ENCODE measurements at regions of chr11 and their contacts with region 1.

Region 1: GRCh38 chr11:75532200-75533048 is 6.7 kb upstream of the GDPD5 start:
- DNase-seq: peak; percentile 62 to 65
- ATAC-seq: peak in 6 of 8 donors; percentile 38 to 59 (median 48)
- H3K4me3 ChIP-seq: no peak overlapping the region
- H3K27ac ChIP-seq: no peak overlapping the region
- H3K4me1 ChIP-seq: peaks cover 0 to 21% (median 13%) of the 10 kb centered on the region in 9 donors
- H3K27me3 ChIP-seq: no peaks in the 10 kb centered on the region
- CTCF ChIP-seq: peak; percentile 85 to 97 (median 93)

Region 2: DNA sequence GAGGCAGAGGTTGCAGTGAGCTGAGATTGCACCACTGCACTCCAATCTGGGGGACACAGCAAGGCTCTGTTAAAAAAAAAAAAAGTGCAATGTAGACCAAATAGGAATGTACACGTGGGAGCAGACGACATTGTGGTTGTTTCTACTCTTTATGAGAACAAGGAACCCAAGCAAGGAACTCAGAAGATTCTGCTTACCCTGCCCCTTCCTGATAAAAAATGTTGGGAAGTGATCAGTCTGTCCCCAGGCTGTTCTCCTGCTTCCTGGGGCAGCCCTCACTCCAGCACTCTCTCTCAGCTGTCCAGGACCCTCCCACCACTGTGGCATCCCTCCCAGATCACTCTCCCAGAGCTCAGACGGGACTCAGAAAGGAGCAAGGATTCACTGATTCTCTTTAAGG is 349.8 kb before region 1 on chr11:
- intact Hi-C with region 1: no loop called
- DNase-seq: no peak
- ATAC-seq: peak in 7 of 8 donors; percentile 19 to 72 (median 51)
- H3K4me3 ChIP-seq: no peak overlapping the region
- H3K27ac ChIP-seq: peak overlapping the region in 4 of 10 donors; percentile 61 to 86 (median 67)
- H3K4me1 ChIP-seq: peaks cover 0 to 78% (median 25%) of the 10 kb centered on the region in 9 donors
- H3K27me3 ChIP-seq: no peaks in the 10 kb centered on the region
- CTCF ChIP-seq: no peak

Region 3: GRCh38 chr11:75270896-75271418 is 261.5 kb before region 1 on chr11:
- intact Hi-C with region 1: loop called in 2 of 10 experiments (anchors 5 to 10 kb)
- DNase-seq: no peak
- ATAC-seq: no peak
- H3K4me3 ChIP-seq: no peak overlapping the region
- H3K27ac ChIP-seq: no peak overlapping the region
- H3K4me1 ChIP-seq: peaks cover 0 to 15% (median 0%) of the 10 kb centered on the region in 9 donors
- H3K27me3 ChIP-seq: no peaks in the 10 kb centered on the region
- CTCF ChIP-seq: peak in 6 of 9 donors; percentile 6 to 37 (median 26)

Region 4: DNA sequence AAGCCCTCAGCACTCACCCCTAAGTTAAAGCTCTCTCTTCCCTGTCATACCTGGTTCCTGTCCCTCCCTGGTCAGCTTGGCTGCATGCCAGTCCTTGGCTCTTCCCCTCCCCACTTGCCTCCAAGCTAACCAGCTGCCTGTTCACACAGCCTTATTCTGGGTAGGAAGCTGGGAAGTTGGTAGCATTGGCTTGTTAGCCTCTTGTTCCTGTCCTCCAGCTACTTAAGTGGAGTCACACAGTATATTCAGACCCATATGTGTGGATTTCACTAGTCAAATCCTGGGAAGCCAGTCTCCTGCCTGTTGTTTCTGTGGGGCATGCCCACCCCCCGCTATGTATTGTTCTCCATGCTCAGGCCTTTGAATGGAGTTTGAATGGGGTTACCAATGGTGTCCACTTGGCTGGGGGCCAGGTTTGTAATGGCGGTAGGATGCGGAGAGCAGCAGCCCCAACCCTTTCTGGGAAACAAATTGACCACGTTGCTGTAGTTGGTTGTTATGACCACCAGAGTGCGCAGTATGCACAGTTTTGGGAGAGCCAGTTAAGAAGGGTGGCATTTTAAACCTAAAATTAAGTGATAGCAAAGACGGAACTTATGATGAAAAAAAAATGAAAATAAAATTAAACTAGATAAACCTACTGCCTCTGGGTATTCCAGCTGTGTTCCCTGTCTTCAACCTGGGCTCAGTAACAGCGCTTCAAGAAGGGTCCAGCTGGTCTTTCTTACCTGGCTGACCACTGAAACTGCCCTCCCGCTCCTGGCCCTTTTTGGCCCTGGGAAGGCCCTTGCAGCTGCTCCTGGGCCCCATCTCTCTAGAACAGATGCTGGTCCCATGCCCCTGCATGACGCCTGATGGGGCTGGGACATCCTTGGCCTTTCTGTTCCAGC is 143.8 kb before region 1 on chr11:
- intact Hi-C with region 1: loop called in 8 of 10 experiments (anchors 2 to 5 kb)
- DNase-seq: peak; percentile 49 to 71
- ATAC-seq: peak; percentile 46 to 76 (median 64)
- H3K4me3 ChIP-seq: no peak overlapping the region
- H3K27ac ChIP-seq: peak overlapping the region in 4 of 10 donors; percentile 2 to 50 (median 36)
- H3K4me1 ChIP-seq: peaks cover 3 to 24% (median 7%) of the 10 kb centered on the region in 9 donors
- H3K27me3 ChIP-seq: no peaks in the 10 kb centered on the region
- CTCF ChIP-seq: peak; percentile 59 to 90 (median 86)

Region 5: GRCh38 chr11:75399344-75400145 is 132.9 kb before region 1 on chr11 and contains the start of gene RPS3:
- intact Hi-C with region 1: loop called in 4 of 10 experiments (anchors 2 to 5 kb)
- DNase-seq: peak; percentile 89 to 92
- ATAC-seq: peak; percentile 96 to 99 (median 98)
- H3K4me3 ChIP-seq: peak within 1 kb of the TSS; percentile 53 to 87 (median 78)
- H3K27ac ChIP-seq: peak within 1 kb of the TSS; percentile 42 to 98 (median 91)
- H3K4me1 ChIP-seq: peaks cover 8 to 44% (median 29%) of the 10 kb centered on the region in 9 donors
- H3K27me3 ChIP-seq: no peaks in the 10 kb centered on the region
- CTCF ChIP-seq: peak in 4 of 9 donors; percentile 8 to 46 (median 38)
- total RNA-seq, gene RPS3: 803 to 1,301 (median 939) TPM

Region 6: DNA sequence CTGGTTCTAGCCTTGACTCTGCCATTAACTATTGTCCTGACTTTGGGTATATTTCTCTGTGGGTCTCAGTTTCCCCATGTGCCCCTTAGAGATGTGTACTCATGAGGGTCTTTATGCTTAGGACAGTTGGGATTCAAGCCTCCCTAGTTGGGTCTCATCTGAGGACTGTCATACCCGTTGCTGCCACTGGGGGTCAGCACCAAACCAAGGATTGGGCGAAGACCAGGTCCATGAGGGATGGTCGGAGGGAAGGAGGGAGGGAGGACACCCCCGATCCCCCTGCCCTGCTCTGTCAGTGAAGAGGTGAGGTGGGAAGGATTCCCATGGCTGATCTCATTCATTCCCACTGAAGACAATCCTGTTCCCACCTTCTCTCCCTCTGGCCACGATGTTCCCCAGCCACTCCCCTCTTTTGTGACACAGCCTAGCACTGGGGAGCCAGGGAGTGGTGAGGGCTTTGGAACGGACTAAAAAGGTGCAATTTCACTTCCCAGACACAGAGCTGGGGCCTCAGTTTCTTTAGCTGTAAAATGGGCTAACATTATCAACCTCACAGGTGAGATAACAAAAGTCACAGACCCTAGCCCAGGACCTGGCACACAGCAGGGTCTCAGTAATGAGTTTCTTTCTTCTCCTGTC is 87.0 kb before region 1 on chr11:
- intact Hi-C with region 1: loop called (anchors 1 to 2 kb)
- DNase-seq: peak; percentile 66 to 75
- ATAC-seq: peak; percentile 57 to 85 (median 66)
- H3K4me3 ChIP-seq: no peak overlapping the region
- H3K27ac ChIP-seq: no peak overlapping the region
- H3K4me1 ChIP-seq: peaks cover 0 to 7% (median 0%) of the 10 kb centered on the region in 9 donors
- H3K27me3 ChIP-seq: no peaks in the 10 kb centered on the region
- CTCF ChIP-seq: peak; percentile 91 to 98 (median 94)

Region 7: DNA sequence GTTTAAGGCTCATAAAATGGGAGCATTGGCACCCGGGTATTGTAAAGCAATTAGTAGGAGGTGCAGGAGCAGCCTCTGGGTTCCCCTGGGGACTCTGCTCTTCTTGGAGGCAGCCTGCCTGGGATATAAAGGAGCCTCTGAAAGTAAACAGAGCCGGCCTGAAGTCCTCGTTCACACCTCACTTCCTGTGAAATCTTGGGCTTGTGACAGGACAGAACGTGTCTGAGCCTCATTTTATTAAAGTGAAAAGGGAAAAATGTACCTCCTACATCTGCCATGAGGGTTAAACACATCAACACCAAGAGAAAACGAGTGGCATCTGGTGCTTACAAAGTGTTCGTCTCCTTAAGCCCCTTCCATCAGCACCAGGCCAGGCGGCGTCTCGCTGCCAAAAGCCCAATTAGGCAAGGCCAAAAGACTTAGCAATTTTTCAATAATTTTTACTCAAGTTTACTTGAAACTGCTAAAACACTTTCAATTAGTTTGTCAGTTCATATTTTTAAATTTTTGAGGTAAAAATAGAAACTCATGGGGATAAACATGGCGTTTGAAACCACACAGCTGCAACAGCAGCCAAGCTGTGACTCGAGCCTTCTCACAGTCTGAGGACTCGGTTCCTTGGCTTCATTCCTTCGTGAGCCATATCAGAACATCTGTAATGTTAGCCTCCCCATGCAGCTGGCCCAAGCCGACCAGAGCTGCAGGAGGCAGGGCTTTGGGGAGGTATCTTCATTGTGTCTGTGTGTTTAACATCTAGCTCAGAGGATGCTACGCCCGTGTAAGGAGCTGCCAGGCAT is 102.8 kb after region 1 on chr11:
- intact Hi-C with region 1: no loop called
- DNase-seq: peak; percentile 14 to 29
- ATAC-seq: peak in 6 of 8 donors; percentile 45 to 64 (median 59)
- H3K4me3 ChIP-seq: peak overlapping the region in 1 of 10 donors; percentile 4
- H3K27ac ChIP-seq: peak overlapping the region in 8 of 10 donors; percentile 16 to 74 (median 60)
- H3K4me1 ChIP-seq: peaks cover 0 to 31% (median 11%) of the 10 kb centered on the region in 9 donors
- H3K27me3 ChIP-seq: no peaks in the 10 kb centered on the region
- CTCF ChIP-seq: no peak

Region 8: GRCh38 chr11:76185931-76186401 is 653.5 kb after region 1 on chr11:
- intact Hi-C with region 1: no loop called
- DNase-seq: peak; percentile 42 to 50
- ATAC-seq: peak; percentile 15 to 34 (median 28)
- H3K4me3 ChIP-seq: no peak overlapping the region
- H3K27ac ChIP-seq: peak overlapping the region in 6 of 10 donors; percentile 22 to 72 (median 64)
- H3K4me1 ChIP-seq: peaks cover 10 to 44% (median 34%) of the 10 kb centered on the region in 9 donors
- H3K27me3 ChIP-seq: no peaks in the 10 kb centered on the region
- CTCF ChIP-seq: no peak

Measured in heart right ventricle (tissue), 16 donors.